Body of pancreas (tissue), 4 donors: ENCODE measurements at regions of chr3 and their contacts with region 1.

Region 1: GRCh38 chr3:126357295-126358037 is at the start of gene KLF15:
- DNase-seq: peak; percentile 88 to 93 (median 91)
- ATAC-seq: peak; percentile 77
- H3K4me3 ChIP-seq: peak within 1 kb of the TSS; percentile 39 to 46
- H3K27ac ChIP-seq: peak within 1 kb of the TSS; percentile 98 to 99 (median 99)
- H3K4me1 ChIP-seq: peaks cover 45% of the 10 kb centered on the region
- H3K27me3 ChIP-seq: no peaks in the 10 kb centered on the region
- CTCF ChIP-seq: no peak
- POLR2A ChIP-seq: peak; percentile 16 to 81 (median 48)
- total RNA-seq, gene KLF15: 37.4 to 40.2 TPM

Region 2: DNA sequence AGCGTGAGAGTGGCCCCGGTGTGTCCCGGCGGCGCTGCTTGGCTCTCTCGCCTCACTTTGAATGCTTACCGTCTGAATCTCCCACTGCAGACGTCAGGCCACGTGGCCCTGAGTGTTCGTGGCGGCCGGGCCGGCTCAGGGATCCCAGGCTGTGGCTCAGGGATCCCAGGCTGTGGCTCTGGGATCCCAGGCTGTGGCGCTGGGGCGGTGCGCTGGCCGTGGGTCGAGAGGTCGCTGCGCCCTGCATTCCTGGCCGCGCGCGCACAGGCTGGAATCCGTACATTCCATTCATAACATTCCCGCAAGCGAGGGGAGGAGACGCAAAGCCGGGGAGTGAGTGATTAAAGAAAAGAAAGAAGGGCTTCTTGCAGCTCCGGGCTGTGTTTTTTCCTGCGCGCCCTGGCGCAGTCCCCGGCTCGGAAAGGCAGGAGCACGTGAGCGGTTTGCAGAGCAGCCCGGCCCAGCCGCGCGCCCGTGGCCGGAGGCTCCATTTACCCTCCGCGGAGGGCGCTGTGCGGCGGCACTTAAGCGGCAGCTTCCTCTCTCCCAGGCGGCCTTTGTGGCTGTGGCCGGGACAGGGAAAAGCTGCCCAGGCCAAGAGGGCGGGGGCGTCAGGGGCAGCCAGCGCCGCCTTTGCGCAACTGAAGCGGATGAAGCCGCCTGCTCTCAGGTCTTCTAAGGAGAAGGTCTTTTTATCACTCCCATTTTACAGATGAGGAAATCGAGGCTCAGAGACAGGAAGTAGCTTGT is 90.1 kb before region 1 on chr3:
- intact Hi-C with region 1: no loop called
- DNase-seq: peak; percentile 74 to 83 (median 80)
- ATAC-seq: peak; percentile 55
- H3K4me3 ChIP-seq: no peak overlapping the region
- H3K27ac ChIP-seq: peak overlapping the region; percentile 83 to 93 (median 92)
- H3K4me1 ChIP-seq: peaks cover 62% of the 10 kb centered on the region
- H3K27me3 ChIP-seq: no peaks in the 10 kb centered on the region
- CTCF ChIP-seq: peak in 3 of 7 experiments; percentile 16 to 27 (median 24)
- POLR2A ChIP-seq: peak; percentile 42 to 70 (median 66)

Region 3: DNA sequence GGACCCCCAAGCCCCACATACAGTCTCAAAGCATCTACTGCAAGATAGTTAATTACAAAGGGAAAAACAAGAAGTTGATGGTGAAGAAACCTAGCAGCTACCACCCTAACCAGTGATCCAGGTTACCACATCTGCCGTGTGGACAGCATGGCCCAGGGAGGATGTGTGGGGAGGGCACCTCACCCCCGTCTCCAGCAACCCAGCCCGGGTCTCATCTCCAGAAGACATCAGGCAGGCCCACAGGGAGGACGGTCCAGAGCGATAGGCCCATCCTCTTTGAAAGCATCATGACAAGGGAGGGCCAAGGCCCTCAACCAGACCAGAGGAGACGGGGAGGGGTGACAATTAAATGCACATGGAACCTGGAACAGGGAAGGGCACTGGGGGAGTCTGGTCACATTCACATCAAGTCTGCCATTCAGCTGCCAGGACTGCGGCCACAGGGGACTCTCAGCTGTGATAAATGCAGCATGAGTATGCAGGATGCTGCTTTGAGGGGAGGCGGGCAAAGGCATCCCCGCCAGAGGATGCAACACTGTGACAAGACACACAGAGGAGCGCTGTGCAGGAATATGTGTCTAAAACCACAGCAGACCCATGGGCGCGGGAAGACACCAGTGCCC is 99.4 kb after region 1 on chr3:
- intact Hi-C with region 1: loop called (anchors 10 kb)
- DNase-seq: peak in 1 of 4 donors; percentile 4
- ATAC-seq: no peak
- H3K4me3 ChIP-seq: no peak overlapping the region
- H3K27ac ChIP-seq: no peak overlapping the region
- H3K4me1 ChIP-seq: peaks cover 35% of the 10 kb centered on the region
- H3K27me3 ChIP-seq: no peaks in the 10 kb centered on the region
- CTCF ChIP-seq: no peak
- POLR2A ChIP-seq: no peak

Region 4: DNA sequence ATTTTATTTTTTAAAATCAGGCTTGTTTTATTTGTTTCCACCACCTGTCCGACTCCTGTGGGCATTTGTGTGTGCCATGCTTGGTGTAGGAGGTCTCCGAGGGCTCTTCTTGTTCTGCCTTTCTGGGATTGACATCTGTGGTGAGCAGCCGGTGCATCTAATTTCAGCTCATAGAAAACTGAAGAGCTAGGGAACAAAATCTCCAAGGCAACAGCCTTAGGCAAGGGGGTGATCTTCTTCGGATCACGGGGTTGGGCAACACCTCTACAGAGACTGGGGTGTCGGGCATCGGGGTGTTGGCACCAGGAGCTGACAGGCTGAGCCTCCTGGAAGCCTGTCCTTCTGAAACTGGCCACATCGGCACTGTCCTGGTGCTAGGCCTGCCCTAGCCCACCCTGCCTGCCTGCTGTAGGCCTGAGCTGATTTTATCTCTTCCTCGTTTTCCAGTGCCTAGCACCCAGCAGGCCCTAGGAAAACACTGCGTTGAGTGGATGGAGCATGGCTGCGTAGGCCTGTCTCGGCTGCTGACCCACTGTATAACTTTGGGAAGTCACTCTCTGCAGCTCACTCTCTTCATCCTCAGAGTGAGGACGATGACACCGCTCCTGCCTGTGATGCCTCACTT is 356.9 kb after region 1 on chr3:
- intact Hi-C with region 1: no loop called
- DNase-seq: no peak
- ATAC-seq: no peak
- H3K4me3 ChIP-seq: no peak overlapping the region
- H3K27ac ChIP-seq: no peak overlapping the region
- H3K4me1 ChIP-seq: no peaks in the 10 kb centered on the region
- H3K27me3 ChIP-seq: no peaks in the 10 kb centered on the region
- CTCF ChIP-seq: no peak
- POLR2A ChIP-seq: no peak